Heart left ventricle (tissue), 16 donors: ENCODE measurements at regions of chr6 and their contacts with region 1.

Region 1: DNA sequence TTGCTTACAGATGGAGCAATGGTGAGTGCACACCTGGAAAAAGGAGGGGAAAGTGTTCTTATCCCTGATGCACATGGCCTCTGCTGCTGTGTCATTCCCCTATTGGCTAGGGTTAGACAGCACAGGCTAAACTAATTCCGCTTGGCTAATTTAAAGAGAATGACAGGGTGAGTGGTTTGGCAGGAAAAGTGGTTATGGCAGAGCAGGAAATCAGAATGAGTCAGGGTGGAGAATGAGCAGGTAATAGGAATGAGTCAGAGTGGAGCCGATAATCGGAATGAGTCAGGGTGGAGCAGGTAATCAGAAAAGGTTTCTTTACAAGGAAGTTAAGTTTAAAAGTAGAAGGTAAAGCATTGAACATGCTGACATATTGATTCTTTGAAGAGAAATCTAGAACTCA is 355.5 kb upstream of the HTR1E start:
- DNase-seq: no peak
- ATAC-seq: no peak
- H3K4me3 ChIP-seq: no peak overlapping the region
- H3K27ac ChIP-seq: no peak overlapping the region
- H3K4me1 ChIP-seq: no peaks in the 10 kb centered on the region
- H3K27me3 ChIP-seq: no peaks in the 10 kb centered on the region
- CTCF ChIP-seq: no peak
- POLR2A ChIP-seq: no peak

Region 2: DNA sequence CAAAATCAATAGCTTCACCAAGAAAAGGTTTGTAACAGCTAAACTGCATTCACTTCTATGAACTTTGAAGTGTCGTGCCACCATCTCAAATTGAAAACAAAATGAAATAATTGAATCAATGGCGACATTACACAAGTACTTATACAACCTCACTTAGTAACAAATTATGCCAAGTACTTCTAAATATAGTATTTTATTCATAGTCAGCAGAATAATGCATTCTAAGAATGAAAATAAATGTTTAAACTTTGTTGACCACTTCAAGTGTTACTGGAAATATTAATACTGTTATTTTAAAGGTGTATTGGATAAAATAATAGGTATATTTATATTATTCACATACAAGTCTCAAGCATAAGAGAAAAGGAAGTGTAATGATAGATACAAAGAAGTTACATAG is 75.4 kb after region 1 on chr6:
- intact Hi-C with region 1: loop called in 1 of 10 experiments (anchors 5 kb)
- DNase-seq: no peak
- ATAC-seq: no peak
- H3K4me3 ChIP-seq: no peak overlapping the region
- H3K27ac ChIP-seq: no peak overlapping the region
- H3K4me1 ChIP-seq: no peaks in the 10 kb centered on the region
- H3K27me3 ChIP-seq: no peaks in the 10 kb centered on the region
- CTCF ChIP-seq: no peak
- POLR2A ChIP-seq: no peak